ENCODE measurements at regions of chr17 and their contacts with region 1.

Region 1: DNA sequence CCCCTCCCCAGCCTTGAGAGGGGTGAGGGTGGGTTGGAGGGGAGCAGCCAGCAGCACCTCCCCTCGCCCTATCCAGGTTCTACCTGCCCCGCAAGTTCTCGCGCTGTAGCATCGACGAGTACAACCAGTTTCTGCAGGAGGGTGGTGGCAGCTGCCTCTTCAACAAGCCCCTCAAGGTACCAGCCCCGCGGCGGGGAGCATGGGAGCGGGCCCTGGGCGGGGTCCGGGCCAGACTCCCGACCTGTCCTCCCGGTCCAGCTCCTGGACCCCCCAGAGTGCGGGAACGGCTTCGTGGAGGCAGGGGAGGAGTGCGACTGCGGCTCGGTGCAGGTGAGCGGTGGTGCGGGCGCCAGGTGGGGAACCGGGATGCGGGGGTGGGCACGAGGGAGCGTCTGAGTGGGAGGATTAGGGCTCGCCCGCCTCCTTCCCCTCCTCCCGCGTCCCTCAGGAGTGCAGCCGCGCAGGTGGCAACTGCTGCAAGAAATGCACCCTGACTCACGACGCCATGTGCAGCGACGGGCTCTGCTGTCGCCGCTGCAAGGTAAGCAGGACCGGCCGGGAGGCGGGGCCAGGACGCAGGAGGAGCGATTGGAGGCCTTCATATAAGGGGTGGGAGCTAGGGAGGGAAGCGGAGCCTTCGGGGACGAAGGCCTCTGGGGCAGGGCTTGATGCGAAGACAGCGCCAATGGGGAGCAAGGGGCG is 16.5 kb downstream of the ADAM11 start:
- DNase-seq: peak; percentile 98
- H3K4me3 ChIP-seq: peak overlapping the region; percentile 41 to 84 (median 60)
- H3K27ac ChIP-seq: no peak overlapping the region
- H3K4me1 ChIP-seq: peaks cover 24% of the 10 kb centered on the region
- H3K27me3 ChIP-seq: no peaks in the 10 kb centered on the region
- CTCF ChIP-seq: no peak

Region 2: GRCh38 chr17:44708401-44709181 is 66.7 kb before region 1 on chr17 and contains the start of gene DBF4B:
- CTCF ChIA-PET with region 1: interaction called, 11 read pairs
- dilution Hi-C with region 1: no loop called
- in situ Hi-C with region 1: no loop called
- intact Hi-C with region 1: no loop called
- DNase-seq: peak; percentile 89
- H3K4me3 ChIP-seq: peak within 1 kb of the TSS; percentile 68 to 96 (median 95)
- H3K27ac ChIP-seq: peak within 1 kb of the TSS; percentile 58
- H3K4me1 ChIP-seq: peaks cover 10% of the 10 kb centered on the region
- H3K27me3 ChIP-seq: no peaks in the 10 kb centered on the region
- CTCF ChIP-seq: no peak
- total RNA-seq, gene DBF4B: 1.3 to 13.8 TPM

Region 3: DNA sequence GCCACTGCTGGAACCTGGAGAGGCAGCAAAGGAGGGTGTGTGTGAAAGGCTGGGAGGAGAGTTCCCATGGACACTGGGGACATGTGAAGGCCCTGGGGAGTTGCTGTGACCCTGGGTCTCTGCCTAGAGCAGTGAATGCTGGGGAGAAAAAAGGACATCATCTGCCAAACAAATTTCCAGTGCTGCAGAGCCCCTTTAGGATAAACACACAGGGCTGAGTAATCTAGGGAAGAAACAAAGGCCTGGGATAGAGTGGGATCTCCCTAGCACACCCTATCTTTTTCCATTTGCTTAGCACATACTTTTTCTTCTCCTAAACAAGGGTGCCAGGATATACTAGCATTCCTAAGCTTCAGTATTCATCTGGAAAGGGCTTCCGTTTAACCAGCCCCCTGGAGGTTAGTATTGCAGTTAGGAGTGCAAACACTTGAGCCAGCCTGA is 69.1 kb after region 1 on chr17:
- CTCF ChIA-PET with region 1: interaction called, 25 read pairs
- dilution Hi-C with region 1: no loop called
- in situ Hi-C with region 1: no loop called
- intact Hi-C with region 1: no loop called
- DNase-seq: no peak
- H3K4me3 ChIP-seq: no peak overlapping the region
- H3K27ac ChIP-seq: no peak overlapping the region
- H3K4me1 ChIP-seq: no peaks in the 10 kb centered on the region
- H3K27me3 ChIP-seq: no peaks in the 10 kb centered on the region
- CTCF ChIP-seq: no peak

Region 4: GRCh38 chr17:44864866-44865660 is 89.8 kb after region 1 on chr17:
- CTCF ChIA-PET with region 1: interaction called, 13 read pairs
- dilution Hi-C with region 1: loop called (anchors 10 kb)
- in situ Hi-C with region 1: loop called (anchors 5 kb)
- intact Hi-C with region 1: loop called (anchors 1 kb)
- DNase-seq: peak; percentile 33
- H3K4me3 ChIP-seq: no peak overlapping the region
- H3K27ac ChIP-seq: no peak overlapping the region
- H3K4me1 ChIP-seq: no peaks in the 10 kb centered on the region
- H3K27me3 ChIP-seq: no peaks in the 10 kb centered on the region
- CTCF ChIP-seq: peak; percentile 85 to 90

Region 5: GRCh38 chr17:44887971-44888954 is 113.0 kb after region 1 on chr17:
- CTCF ChIA-PET with region 1: no interaction called
- dilution Hi-C with region 1: no loop called
- in situ Hi-C with region 1: no loop called
- intact Hi-C with region 1: no loop called
- DNase-seq: no peak
- H3K4me3 ChIP-seq: no peak overlapping the region
- H3K27ac ChIP-seq: no peak overlapping the region
- H3K4me1 ChIP-seq: no peaks in the 10 kb centered on the region
- H3K27me3 ChIP-seq: no peaks in the 10 kb centered on the region
- CTCF ChIP-seq: no peak

Region 6: GRCh38 chr17:45021607-45022287 is 246.5 kb after region 1 on chr17:
- CTCF ChIA-PET with region 1: no interaction called
- dilution Hi-C with region 1: loop called (anchors 10 kb)
- in situ Hi-C with region 1: no loop called
- intact Hi-C with region 1: loop called (anchors 5 kb)
- DNase-seq: peak; percentile 39
- H3K4me3 ChIP-seq: peak overlapping the region in 1 of 3 experiments; percentile 24
- H3K27ac ChIP-seq: no peak overlapping the region
- H3K4me1 ChIP-seq: peaks cover 14% of the 10 kb centered on the region
- H3K27me3 ChIP-seq: no peaks in the 10 kb centered on the region
- CTCF ChIP-seq: peak; percentile 57 to 71